ENCODE measurements at regions of chr6 and their contacts with region 1.

Region 1: DNA sequence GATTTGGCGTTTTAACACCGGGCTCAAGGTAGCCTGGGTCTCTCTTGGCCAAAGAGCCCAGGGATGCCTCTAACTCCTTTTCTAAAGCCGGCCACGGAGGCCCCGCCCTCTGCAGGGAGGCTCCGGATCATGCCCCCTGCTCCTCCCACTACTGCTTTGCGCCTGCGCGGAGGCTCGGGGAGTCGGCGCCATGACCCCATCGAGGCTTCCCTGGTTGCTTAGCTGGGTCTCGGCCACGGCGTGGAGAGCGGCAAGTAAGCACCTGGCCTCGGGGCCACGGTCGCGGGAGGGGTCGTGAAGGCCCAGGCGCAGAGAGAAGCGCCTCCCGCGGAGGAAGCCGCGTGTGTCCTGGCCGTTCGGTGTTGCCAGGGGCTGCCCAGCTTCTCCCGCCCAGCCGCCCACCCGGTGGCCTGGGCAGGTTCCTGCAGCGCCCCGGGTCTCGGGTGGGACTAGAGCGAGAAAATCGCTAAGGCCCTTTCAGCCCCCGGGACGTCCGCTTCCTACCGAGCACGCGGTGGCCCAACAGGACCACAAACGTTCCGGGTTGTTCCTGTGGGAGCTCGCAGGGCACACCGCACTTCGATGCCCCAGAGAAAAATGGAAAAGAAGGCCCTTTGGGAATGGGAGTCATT is at the start of gene SDHAF4:
- DNase-seq: peak; percentile 92 to 95 (median 94)
- ATAC-seq: peak; percentile 99
- H3K4me3 ChIP-seq: peak within 1 kb of the TSS; percentile 53 to 83
- H3K27ac ChIP-seq: peak within 1 kb of the TSS; percentile 55 to 89 (median 86)
- H3K4me1 ChIP-seq: peaks cover 12% of the 10 kb centered on the region
- H3K27me3 ChIP-seq: no peaks in the 10 kb centered on the region
- CTCF ChIP-seq: peak in 4 of 7 experiments; percentile 10 to 31 (median 24)
- POLR2A ChIP-seq: peak; percentile 36 to 76 (median 75)
- total RNA-seq, gene SDHAF4: 3.0 to 7.3 TPM

Region 2: DNA sequence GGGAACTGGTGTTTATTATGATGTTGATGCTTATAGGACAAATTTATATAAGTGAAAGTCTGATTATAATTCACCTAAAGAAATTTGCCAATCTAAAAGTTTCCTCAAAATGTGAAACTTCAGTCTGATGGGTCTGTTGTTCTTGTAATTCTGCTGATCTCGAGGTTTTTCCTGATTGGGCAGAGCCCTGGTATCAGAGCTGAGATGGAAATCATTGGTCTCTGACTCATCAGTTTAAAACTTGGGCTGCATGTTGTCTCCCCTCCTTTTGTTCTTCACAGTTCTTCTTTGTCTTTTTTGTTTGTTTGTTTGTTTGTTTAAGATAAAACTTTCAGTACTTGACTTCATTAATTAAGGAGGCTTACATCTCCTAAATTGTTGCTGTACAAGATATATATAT is 106.7 kb after region 1 on chr6:
- intact Hi-C with region 1: loop called (anchors 10 kb)
- DNase-seq: no peak
- ATAC-seq: no peak
- H3K4me3 ChIP-seq: no peak overlapping the region
- H3K27ac ChIP-seq: no peak overlapping the region
- H3K4me1 ChIP-seq: peaks cover 49% of the 10 kb centered on the region
- H3K27me3 ChIP-seq: no peaks in the 10 kb centered on the region
- CTCF ChIP-seq: no peak
- POLR2A ChIP-seq: no peak

Measured in body of pancreas (tissue), 4 donors.